ENCODE measurements at regions of chr14 and their contacts with region 1.

Region 1: GRCh38 chr14:99192028-99192621 is 79.9 kb downstream of the BCL11B start:
- DNase-seq: no peak
- ATAC-seq: peak; percentile 8
- H3K4me3 Mint-ChIP-seq: peak overlapping the region; percentile 79
- H3K27ac Mint-ChIP-seq: peak overlapping the region; percentile 99
- H3K4me1 Mint-ChIP-seq: peaks cover 89% of the 10 kb centered on the region
- H3K27me3 Mint-ChIP-seq: no peaks in the 10 kb centered on the region

Region 2: GRCh38 chr14:97994020-97994531 is 1198.0 kb before region 1 on chr14:
- CTCF ChIA-PET with region 1: no interaction called
- POLR2A ChIA-PET with region 1: no interaction called
- intact Hi-C with region 1: loop called in 1 of 2 experiments (anchors 5 kb)
- DNase-seq: peak; percentile 52
- ATAC-seq: peak; percentile 81
- H3K4me3 Mint-ChIP-seq: peak overlapping the region; percentile 18
- H3K27ac Mint-ChIP-seq: peak overlapping the region; percentile 94
- H3K4me1 Mint-ChIP-seq: peaks cover 71% of the 10 kb centered on the region
- H3K27me3 Mint-ChIP-seq: no peaks in the 10 kb centered on the region

Region 3: DNA sequence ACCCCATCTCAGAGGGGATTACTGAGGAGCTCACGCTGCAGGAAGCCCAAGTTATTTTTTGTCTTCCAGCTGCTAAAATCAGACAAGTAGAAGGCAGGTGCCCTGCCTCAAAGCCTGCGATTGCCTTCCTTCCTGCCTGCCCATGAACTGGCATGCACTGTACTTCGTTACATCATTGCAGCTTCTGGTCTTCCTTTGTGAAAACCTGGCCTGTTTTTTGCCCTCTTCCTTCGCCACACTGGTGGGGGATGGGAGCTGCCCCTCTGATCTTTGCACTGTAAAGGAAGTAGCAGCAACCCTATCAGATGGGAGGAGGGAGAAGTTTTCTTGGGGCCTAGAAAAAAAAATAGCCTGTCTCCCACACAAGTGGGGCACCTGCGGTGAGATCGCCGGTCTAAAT is 1018.8 kb before region 1 on chr14:
- CTCF ChIA-PET with region 1: interaction called, 3 read pairs
- POLR2A ChIA-PET with region 1: interaction called, 4 read pairs
- intact Hi-C with region 1: loop called (anchors 5 kb)
- DNase-seq: peak; percentile 70
- ATAC-seq: no peak
- H3K4me3 Mint-ChIP-seq: peak overlapping the region; percentile 50
- H3K27ac Mint-ChIP-seq: peak overlapping the region; percentile 99
- H3K4me1 Mint-ChIP-seq: peaks cover 99% of the 10 kb centered on the region
- H3K27me3 Mint-ChIP-seq: no peaks in the 10 kb centered on the region

Region 4: DNA sequence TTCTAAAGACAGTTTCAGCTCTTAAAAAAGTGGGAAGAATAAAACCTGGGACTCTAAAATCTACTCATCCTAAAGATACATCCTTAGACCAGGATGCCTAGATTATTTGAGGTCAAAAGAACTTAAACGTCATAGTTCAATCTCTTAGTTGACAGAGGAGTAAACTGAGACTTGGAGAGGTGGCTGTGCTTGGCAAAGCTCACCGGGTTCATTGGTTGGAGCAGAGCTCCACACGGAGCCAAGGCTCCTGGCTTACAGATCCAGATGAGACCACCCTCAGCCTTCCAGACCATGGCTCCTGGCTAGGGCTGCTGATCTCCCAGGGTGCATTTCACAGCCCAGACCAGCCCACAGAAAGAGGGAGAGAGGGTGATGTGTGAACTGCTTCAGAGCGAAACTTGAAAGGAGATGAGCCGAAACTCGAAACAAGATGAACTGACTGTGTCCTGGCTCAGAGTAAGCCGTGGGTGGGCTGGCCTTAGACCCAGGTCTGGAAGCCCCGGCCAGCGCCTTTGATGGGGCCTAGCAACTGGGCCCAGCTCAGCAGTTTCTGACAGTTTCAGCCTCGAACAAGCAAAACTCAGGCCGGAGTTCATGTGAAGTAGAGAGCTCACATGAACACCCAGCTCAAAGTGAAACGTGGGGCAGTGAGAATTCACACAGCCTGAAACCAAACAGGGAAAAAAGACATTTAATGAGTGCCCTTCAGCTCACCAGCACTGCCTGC is 965.0 kb before region 1 on chr14:
- CTCF ChIA-PET with region 1: no interaction called
- POLR2A ChIA-PET with region 1: no interaction called
- intact Hi-C with region 1: loop called in 1 of 2 experiments (anchors 5 kb)
- DNase-seq: peak; percentile 75
- ATAC-seq: peak; percentile 70
- H3K4me3 Mint-ChIP-seq: peak overlapping the region; percentile 45
- H3K27ac Mint-ChIP-seq: peak overlapping the region; percentile 95
- H3K4me1 Mint-ChIP-seq: peaks cover 88% of the 10 kb centered on the region
- H3K27me3 Mint-ChIP-seq: no peaks in the 10 kb centered on the region

Region 5: DNA sequence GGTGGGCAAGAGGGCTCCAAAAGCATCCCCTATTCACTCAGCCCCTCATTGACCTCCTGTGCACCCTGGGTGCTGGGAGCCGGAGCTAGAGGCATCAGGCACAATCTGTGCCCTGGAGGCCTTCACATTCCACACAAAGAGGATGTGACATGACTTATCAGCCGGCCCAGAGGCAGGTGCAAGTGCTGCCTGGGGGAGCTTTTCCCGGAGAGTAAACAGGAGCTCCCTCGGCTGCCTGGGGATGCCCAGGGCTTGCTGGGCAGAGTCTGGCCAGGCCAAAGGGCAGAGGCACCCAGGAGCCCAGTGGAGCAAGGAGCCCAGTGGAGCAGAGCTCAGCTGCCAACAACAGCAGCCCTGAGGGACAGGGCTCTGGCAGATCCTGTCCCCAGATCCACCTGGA is 15.4 kb after region 1 on chr14:
- CTCF ChIA-PET with region 1: interaction called, 18 read pairs
- POLR2A ChIA-PET with region 1: interaction called, 4 read pairs
- intact Hi-C with region 1: loop called in 1 of 2 experiments (anchors 2 kb)
- DNase-seq: no peak
- ATAC-seq: no peak
- H3K4me3 Mint-ChIP-seq: peak overlapping the region; percentile 14
- H3K27ac Mint-ChIP-seq: peak overlapping the region; percentile 99
- H3K4me1 Mint-ChIP-seq: peaks cover 100% of the 10 kb centered on the region
- H3K27me3 Mint-ChIP-seq: no peaks in the 10 kb centered on the region

Region 6: GRCh38 chr14:99230208-99231151 is 38.4 kb after region 1 on chr14:
- CTCF ChIA-PET with region 1: interaction called, 7 read pairs
- POLR2A ChIA-PET with region 1: interaction called, 3 read pairs
- intact Hi-C with region 1: loop called (anchors 1 to 2 kb)
- DNase-seq: peak; percentile 91
- ATAC-seq: peak; percentile 55
- H3K4me3 Mint-ChIP-seq: peak overlapping the region; percentile 67
- H3K27ac Mint-ChIP-seq: peak overlapping the region; percentile 88
- H3K4me1 Mint-ChIP-seq: peaks cover 93% of the 10 kb centered on the region
- H3K27me3 Mint-ChIP-seq: no peaks in the 10 kb centered on the region

Region 7: GRCh38 chr14:99245564-99246511 is 53.7 kb after region 1 on chr14:
- CTCF ChIA-PET with region 1: interaction called, 4 read pairs
- POLR2A ChIA-PET with region 1: interaction called, 3 read pairs
- intact Hi-C with region 1: loop called in 1 of 2 experiments (anchors 5 kb)
- DNase-seq: peak; percentile 60
- ATAC-seq: no peak
- H3K4me3 Mint-ChIP-seq: peak overlapping the region; percentile 67
- H3K27ac Mint-ChIP-seq: peak overlapping the region; percentile 93
- H3K4me1 Mint-ChIP-seq: peaks cover 81% of the 10 kb centered on the region
- H3K27me3 Mint-ChIP-seq: no peaks in the 10 kb centered on the region